Heart left ventricle (tissue), 16 donors: ENCODE measurements at regions of chr12 and their contacts with region 1.

Region 1: GRCh38 chr12:122123051-122123760 is 44.6 kb downstream of the MLXIP start:
- DNase-seq: peak; percentile 55 to 68 (median 64)
- ATAC-seq: peak in 3 of 4 donors; percentile 44 to 56 (median 51)
- H3K4me3 ChIP-seq: peak overlapping the region in 4 of 12 donors; percentile 2 to 21 (median 16)
- H3K27ac ChIP-seq: peak overlapping the region in 2 of 12 donors; percentile 36 to 64
- H3K4me1 ChIP-seq: peaks cover 0 to 57% (median 30%) of the 10 kb centered on the region in 12 donors
- H3K27me3 ChIP-seq: no peaks in the 10 kb centered on the region
- CTCF ChIP-seq: peak; percentile 64 to 90 (median 78)
- POLR2A ChIP-seq: no peak

Region 2: GRCh38 chr12:122051231-122051876 is 71.9 kb before region 1 on chr12:
- intact Hi-C with region 1: loop called (anchors 1 to 2 kb)
- DNase-seq: peak in 4 of 5 donors; percentile 68 to 73 (median 72)
- ATAC-seq: peak; percentile 77 to 85 (median 80)
- H3K4me3 ChIP-seq: no peak overlapping the region
- H3K27ac ChIP-seq: peak overlapping the region; percentile 62 to 97 (median 84)
- H3K4me1 ChIP-seq: peaks cover 4 to 29% (median 19%) of the 10 kb centered on the region in 12 donors
- H3K27me3 ChIP-seq: no peaks in the 10 kb centered on the region
- CTCF ChIP-seq: peak in 1 of 12 donors; percentile 7
- POLR2A ChIP-seq: no peak

Region 3: DNA sequence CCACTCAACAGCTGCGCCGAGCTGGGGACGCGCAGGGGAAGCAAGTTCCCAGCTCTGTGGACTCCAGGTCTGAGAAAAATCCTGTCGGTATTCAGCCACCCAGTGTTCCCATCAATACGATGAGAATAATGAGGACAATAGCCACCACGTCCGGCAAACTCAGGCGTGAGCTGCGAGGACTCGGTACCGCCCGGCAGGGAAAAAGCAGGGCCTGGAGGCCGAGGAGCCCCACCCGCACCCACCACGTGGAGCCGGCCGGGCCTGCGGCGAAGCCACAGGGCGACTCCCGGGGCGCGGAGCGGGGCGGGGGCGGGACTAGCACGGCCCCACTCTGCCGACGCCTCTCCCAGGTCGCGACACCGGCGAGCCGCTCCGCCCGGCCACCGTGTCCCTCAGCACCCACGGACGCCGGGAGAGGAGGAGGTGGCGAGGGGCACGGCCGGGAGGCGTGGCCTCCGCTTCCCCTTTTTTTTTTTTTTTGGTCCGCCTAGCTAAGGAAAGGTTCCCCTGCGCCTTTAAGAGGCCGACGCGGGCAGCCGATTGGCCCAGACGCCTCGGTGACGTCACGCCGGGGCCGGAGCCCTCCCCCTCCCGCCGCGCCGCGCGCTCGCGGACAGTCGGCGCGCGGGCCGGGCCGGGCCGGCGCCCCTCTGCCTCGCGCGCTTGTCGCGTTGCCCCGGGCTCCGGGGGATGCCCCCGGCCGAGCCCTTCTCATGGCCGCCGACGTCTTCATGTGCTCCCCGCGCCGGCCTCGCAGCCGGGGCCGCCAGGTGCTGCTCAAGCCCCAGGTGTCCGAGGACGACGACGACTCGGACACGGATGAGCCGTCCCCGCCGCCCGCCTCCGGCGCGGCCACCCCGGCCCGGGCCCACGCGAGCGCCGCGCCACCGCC is 44.8 kb before region 1 on chr12 and contains the start of gene MLXIP:
- intact Hi-C with region 1: loop called in 2 of 10 experiments (anchors 5 kb)
- DNase-seq: peak; percentile 95 to 97 (median 95)
- ATAC-seq: peak; percentile 79 to 94 (median 88)
- H3K4me3 ChIP-seq: peak within 1 kb of the TSS; percentile 32 to 94 (median 74)
- H3K27ac ChIP-seq: peak within 1 kb of the TSS; percentile 53 to 95 (median 86)
- H3K4me1 ChIP-seq: peaks cover 7 to 55% (median 38%) of the 10 kb centered on the region in 12 donors
- H3K27me3 ChIP-seq: no peaks in the 10 kb centered on the region
- CTCF ChIP-seq: no peak
- POLR2A ChIP-seq: peak; percentile 87 to 92
- total RNA-seq, gene MLXIP: 14.3 to 39.6 (median 22.7) TPM